CD4-positive, alpha-beta memory T cell (primary cell): ENCODE measurements at regions of chr4 and their contacts with region 1.

Region 1: DNA sequence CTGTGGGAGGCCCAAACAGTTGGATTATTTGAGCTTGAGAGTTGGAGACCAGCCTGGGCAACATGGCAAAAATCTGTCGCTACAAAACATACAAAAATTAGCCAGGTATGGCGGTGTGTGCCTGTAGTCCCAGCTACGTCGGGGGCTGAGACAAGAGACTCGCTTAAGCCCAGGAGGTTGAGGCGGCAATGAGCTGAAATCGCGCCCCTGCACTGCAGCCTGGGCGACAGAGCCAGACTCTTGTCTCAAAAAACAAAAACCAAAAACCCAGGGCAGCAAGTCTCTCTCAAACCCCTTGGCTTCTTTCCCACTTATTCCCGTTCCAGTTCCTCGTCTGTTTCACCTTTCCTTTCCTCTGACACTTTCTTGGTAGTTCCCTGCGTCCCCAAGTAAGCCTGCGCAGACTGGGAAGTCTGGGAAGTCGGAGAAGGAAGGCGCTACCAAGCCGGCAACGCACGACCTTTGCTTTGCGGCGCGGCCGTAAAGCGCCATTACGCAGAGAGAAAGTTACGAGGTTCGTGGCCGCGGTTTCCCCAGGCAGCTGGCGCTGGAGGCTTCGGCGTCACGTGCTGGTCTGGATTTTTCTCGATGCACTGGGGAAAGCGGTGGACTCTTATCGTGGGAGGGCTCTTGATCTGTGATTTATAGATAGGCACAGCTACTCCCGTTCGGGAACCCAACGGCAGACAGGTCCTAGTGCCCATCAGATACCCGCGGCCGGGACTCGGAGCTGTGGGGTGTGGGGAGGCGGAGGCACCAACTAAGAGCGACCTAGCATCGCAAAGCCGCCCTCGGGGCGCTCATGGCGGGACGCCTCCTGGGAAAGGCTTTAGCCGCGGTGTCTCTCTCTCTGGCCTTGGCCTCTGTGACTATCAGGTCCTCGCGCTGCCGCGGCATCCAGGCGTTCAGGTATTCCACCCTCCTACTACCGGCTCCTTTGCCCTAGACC is at the start of gene NUDT9:
- DNase-seq: peak; percentile 88 to 93 (median 91)
- H3K4me3 ChIP-seq: peak within 1 kb of the TSS; percentile 80 to 93
- H3K4me3 Mint-ChIP-seq: peak within 1 kb of the TSS; percentile 96 to 99 (median 99)
- H3K27ac ChIP-seq: peak within 1 kb of the TSS; percentile 82
- H3K27ac Mint-ChIP-seq: peak within 1 kb of the TSS; percentile 98 to 100 (median 99)
- H3K4me1 ChIP-seq: peaks cover 33% of the 10 kb centered on the region
- H3K4me1 Mint-ChIP-seq: peaks cover 14 to 50% (median 34%) of the 10 kb centered on the region in 4 donors
- H3K27me3 ChIP-seq: no peaks in the 10 kb centered on the region
- H3K27me3 Mint-ChIP-seq: no peaks in the 10 kb centered on the region
- total RNA-seq, gene NUDT9: 16.7 to 18.3 TPM

Region 2: GRCh38 chr4:87220094-87220822 is 202.1 kb before region 1 on chr4 and contains the start of gene KLHL8:
- CTCF ChIA-PET with region 1: no interaction called
- POLR2A ChIA-PET with region 1: interaction called, 5 read pairs
- intact Hi-C with region 1: loop called (anchors 1 kb)
- DNase-seq: peak; percentile 84 to 91 (median 90)
- H3K4me3 ChIP-seq: peak within 1 kb of the TSS; percentile 82 to 89
- H3K4me3 Mint-ChIP-seq: peak within 1 kb of the TSS; percentile 91 to 98 (median 95)
- H3K27ac ChIP-seq: peak within 1 kb of the TSS; percentile 85
- H3K27ac Mint-ChIP-seq: peak within 1 kb of the TSS; percentile 81 to 96 (median 94)
- H3K4me1 ChIP-seq: peaks cover 16% of the 10 kb centered on the region
- H3K4me1 Mint-ChIP-seq: peaks cover 9 to 23% (median 16%) of the 10 kb centered on the region in 4 donors
- H3K27me3 ChIP-seq: no peaks in the 10 kb centered on the region
- H3K27me3 Mint-ChIP-seq: no peaks in the 10 kb centered on the region
- total RNA-seq, gene KLHL8: 11.0 to 11.4 TPM

Region 3: GRCh38 chr4:87390891-87391575 is 31.3 kb before region 1 on chr4 and contains the start of gene HSD17B11:
- CTCF ChIA-PET with region 1: interaction called, 22 read pairs
- POLR2A ChIA-PET with region 1: interaction called, 59 read pairs
- intact Hi-C with region 1: loop called (anchors 1 kb)
- DNase-seq: peak; percentile 80 to 88 (median 83)
- H3K4me3 ChIP-seq: peak within 1 kb of the TSS; percentile 87 to 90
- H3K4me3 Mint-ChIP-seq: peak within 1 kb of the TSS; percentile 89 to 99 (median 96)
- H3K27ac ChIP-seq: peak within 1 kb of the TSS; percentile 74
- H3K27ac Mint-ChIP-seq: peak within 1 kb of the TSS; percentile 82 to 98 (median 94)
- H3K4me1 ChIP-seq: peaks cover 41% of the 10 kb centered on the region
- H3K4me1 Mint-ChIP-seq: peaks cover 31 to 50% (median 42%) of the 10 kb centered on the region in 4 donors
- H3K27me3 ChIP-seq: no peaks in the 10 kb centered on the region
- H3K27me3 Mint-ChIP-seq: no peaks in the 10 kb centered on the region
- total RNA-seq, gene HSD17B11: 69.7 to 69.8 TPM

Region 4: DNA sequence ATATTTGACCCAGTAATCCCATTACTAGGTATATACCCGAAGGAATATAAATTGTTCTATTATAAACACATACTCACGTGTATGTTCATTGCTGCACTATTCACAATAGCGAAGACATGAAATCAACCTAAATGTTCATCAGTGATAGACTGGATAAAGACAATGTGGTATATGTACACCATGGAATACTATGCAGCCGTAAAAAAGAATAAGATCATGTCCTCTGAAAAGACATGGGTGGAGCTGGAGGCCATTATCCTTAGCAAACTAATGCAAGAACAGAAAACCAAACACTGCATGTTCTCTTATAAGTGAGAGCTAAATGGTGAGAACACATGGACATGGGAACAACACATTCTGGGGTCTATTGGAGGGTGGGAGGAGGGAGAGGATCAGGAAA is 36.5 kb after region 1 on chr4:
- CTCF ChIA-PET with region 1: no interaction called
- POLR2A ChIA-PET with region 1: no interaction called
- intact Hi-C with region 1: no loop called
- DNase-seq: no peak
- H3K4me3 ChIP-seq: no peak overlapping the region
- H3K4me3 Mint-ChIP-seq: no peak overlapping the region
- H3K27ac ChIP-seq: no peak overlapping the region
- H3K27ac Mint-ChIP-seq: no peak overlapping the region
- H3K4me1 ChIP-seq: no peaks in the 10 kb centered on the region
- H3K4me1 Mint-ChIP-seq: no peaks in the 10 kb centered on the region
- H3K27me3 ChIP-seq: no peaks in the 10 kb centered on the region
- H3K27me3 Mint-ChIP-seq: no peaks in the 10 kb centered on the region

Region 5: DNA sequence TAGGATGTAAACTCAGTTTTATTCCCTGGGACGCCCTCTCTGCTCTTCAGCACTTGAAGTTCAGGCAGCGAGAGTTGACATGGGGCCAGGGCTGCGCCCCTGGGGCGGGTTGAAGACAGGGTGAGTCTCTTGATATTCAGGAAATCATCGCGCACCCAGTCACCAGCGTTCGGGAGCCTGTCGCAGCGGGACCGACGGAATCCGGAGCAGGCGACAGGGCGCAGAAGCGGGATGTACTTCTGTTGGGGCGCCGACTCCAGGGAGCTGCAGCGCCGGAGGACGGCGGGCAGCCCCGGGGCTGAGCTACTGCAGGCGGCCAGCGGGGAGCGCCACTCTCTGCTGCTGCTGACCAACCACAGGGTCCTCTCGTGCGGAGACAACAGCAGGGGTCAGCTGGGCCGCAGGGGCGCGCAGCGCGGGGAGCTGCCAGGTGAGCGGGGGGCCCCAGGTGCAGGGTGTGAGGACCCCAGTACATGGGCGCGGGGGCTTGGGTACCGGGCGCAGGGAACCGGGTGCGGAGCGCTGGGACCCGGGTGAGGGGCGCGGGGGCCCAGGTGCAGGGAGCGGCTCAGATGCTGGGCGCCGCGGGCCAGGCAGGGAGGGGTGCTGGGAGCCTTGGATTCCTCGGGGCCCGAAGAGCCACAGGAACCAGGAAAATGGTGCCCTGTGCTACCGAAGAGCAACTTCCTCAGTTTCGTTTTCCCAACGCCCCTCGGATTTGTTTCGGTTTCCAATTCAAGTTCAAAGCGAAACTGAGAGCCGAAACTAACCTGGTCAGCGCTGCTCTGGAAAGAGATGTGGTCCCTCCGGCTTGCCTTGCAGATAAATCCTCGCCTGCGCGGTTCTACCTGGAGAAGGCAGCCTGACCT is 956.5 kb after region 1 on chr4 and contains the start of gene HERC6:
- CTCF ChIA-PET with region 1: no interaction called
- POLR2A ChIA-PET with region 1: no interaction called
- intact Hi-C with region 1: loop called (anchors 2 kb)
- DNase-seq: peak; percentile 74 to 89 (median 80)
- H3K4me3 ChIP-seq: peak within 1 kb of the TSS; percentile 82 to 96
- H3K4me3 Mint-ChIP-seq: peak within 1 kb of the TSS; percentile 95 to 99 (median 97)
- H3K27ac ChIP-seq: peak within 1 kb of the TSS; percentile 86
- H3K27ac Mint-ChIP-seq: peak within 1 kb of the TSS; percentile 94 to 98 (median 97)
- H3K4me1 ChIP-seq: peaks cover 37% of the 10 kb centered on the region
- H3K4me1 Mint-ChIP-seq: peaks cover 37 to 54% (median 43%) of the 10 kb centered on the region in 4 donors
- H3K27me3 ChIP-seq: no peaks in the 10 kb centered on the region
- H3K27me3 Mint-ChIP-seq: no peaks in the 10 kb centered on the region
- total RNA-seq, gene HERC6: 26.8 to 29.5 TPM